PC-9 (cell line): ENCODE measurements at regions of chr20 and their contacts with region 1.

Region 1: GRCh38 chr20:49268600-49269365 is 9.1 kb downstream of the ZNFX1 start:
- DNase-seq: no peak
- H3K4me3 ChIP-seq: peak overlapping the region; percentile 1; the same call in 1 of the 2 replicates
- H3K27ac ChIP-seq: no peak overlapping the region
- H3K4me1 ChIP-seq: peaks cover 25% of the 10 kb centered on the region
- H3K27me3 ChIP-seq: no peaks in the 10 kb centered on the region
- CTCF ChIP-seq: no peak

Region 2: DNA sequence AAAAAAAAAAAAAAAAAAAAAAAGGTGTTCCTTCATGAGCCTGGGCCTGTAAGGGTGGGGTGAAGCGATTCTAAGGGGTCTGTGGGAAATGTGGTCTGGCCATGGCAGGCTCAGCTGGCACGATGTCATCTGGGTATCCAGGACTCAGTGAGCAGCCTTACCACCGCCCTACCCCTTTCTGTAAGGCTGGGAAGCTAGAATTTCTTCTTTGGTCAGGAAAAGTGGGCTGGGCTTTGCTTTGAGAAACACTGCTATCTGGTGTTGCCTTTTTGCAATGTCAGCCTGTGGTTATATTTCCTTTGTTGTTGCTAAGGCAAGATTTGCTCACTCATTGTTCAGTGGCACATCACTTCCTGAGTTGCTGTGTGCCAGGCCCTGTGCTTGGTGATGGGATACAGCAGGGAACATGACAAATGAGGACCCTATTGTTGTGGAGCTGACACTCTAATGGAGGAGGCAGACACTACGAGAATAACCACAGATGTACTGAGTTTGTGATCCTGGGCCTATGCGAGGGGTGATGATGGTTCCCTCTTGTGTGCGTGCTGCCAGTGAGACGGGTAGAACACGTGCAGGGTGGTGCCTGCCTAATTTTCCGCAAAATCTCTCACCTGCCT is 54.9 kb after region 1 on chr20:
- CTCF ChIA-PET with region 1: interaction called, 10 read pairs
- POLR2A ChIA-PET with region 1: no interaction called
- intact Hi-C with region 1: no loop called
- DNase-seq: peak; percentile 58 to 66
- H3K4me3 ChIP-seq: no peak overlapping the region
- H3K27ac ChIP-seq: no peak overlapping the region
- H3K4me1 ChIP-seq: no peaks in the 10 kb centered on the region
- H3K27me3 ChIP-seq: peaks cover 27% of the 10 kb centered on the region
- CTCF ChIP-seq: peak; percentile 48; the same call in 1 of the 2 replicates